ENCODE measurements at regions of chr11 and their contacts with region 1.

Region 1: DNA sequence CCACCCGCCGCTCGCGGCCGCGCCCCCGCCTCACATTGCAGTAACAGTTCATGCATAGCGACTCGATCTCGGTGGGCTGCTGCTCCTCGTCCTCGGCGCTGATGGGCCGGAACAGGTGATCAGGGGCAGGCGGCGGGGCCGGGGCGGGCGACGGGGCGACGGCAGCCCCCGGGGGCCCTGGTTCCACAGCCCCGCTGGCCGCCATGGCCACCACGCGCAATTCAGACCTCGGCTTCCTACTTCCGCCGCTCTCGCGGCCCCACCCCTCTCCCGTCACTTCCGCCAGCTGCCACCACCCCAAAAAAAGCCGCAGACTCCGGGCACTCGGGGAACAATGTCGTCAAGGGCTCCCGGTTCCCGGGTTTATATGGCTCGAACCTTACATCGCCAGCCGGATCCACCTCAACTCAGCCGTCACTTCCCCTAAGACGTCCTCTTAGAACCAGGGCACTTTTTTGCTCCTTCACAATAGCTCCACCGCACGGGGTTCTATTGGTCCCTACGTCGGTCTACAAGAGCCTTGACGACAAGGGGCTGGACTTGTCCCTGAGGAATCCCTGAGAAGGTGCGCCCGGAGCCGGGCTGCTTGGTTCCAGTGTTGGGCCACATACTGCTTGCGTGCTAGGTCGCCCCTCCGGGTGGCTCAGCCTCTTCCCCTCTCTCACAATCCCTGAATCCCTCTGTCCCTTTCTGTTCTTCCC is at the start of gene ZPR1:
- DNase-seq: peak; percentile 97
- H3K4me3 Mint-ChIP-seq: peak within 1 kb of the TSS; percentile 97
- H3K27ac Mint-ChIP-seq: peak within 1 kb of the TSS; percentile 87
- H3K4me1 Mint-ChIP-seq: peaks cover 44% of the 10 kb centered on the region
- H3K27me3 Mint-ChIP-seq: peaks cover 2% of the 10 kb centered on the region
- total RNA-seq, gene ZPR1: 105 and 106 TPM in 2 replicates

Region 2: DNA sequence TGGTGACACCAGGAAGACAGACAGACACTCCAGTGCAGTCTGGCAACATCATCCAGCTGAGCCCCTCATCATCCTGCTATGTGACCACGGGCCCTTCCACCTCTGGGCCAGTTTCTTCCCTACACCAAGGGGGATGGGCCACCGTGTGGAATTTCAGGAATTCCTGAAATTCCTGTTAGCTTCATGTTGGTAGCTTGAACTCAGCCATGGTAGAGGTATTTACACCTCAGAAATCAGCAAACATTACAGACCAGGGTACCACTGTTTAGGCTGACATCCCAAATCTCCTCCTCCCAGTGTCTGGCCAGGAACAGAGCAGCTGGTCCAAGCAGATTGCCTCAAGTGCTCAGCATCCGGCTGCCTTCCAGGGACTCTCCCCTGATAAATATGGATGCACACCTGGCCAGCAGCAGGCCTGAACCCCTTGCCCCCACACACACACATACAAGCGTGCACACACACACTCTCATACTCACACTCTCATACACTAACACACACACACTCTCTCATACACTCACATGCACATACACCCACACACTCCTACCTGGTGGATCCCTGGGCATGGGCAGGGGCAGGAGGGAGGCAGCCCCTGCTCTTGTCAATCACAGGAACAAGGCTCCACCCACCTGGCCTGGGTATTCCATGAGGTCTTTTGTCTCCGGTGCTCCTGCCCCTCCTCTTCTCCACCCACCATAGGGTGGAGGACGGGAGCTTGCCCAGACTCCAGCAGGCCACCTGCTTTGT is 100.3 kb before region 1 on chr11:
- intact Hi-C with region 1: no loop called
- DNase-seq: no peak
- H3K4me3 Mint-ChIP-seq: no peak overlapping the region
- H3K27ac Mint-ChIP-seq: no peak overlapping the region
- H3K4me1 Mint-ChIP-seq: no peaks in the 10 kb centered on the region
- H3K27me3 Mint-ChIP-seq: peaks cover 9% of the 10 kb centered on the region

Region 3: GRCh38 chr11:116762132-116762531 is 25.8 kb before region 1 on chr11:
- intact Hi-C with region 1: no loop called
- DNase-seq: no peak
- H3K4me3 Mint-ChIP-seq: no peak overlapping the region
- H3K27ac Mint-ChIP-seq: no peak overlapping the region
- H3K4me1 Mint-ChIP-seq: peaks cover 6% of the 10 kb centered on the region
- H3K27me3 Mint-ChIP-seq: no peaks in the 10 kb centered on the region

Region 4: DNA sequence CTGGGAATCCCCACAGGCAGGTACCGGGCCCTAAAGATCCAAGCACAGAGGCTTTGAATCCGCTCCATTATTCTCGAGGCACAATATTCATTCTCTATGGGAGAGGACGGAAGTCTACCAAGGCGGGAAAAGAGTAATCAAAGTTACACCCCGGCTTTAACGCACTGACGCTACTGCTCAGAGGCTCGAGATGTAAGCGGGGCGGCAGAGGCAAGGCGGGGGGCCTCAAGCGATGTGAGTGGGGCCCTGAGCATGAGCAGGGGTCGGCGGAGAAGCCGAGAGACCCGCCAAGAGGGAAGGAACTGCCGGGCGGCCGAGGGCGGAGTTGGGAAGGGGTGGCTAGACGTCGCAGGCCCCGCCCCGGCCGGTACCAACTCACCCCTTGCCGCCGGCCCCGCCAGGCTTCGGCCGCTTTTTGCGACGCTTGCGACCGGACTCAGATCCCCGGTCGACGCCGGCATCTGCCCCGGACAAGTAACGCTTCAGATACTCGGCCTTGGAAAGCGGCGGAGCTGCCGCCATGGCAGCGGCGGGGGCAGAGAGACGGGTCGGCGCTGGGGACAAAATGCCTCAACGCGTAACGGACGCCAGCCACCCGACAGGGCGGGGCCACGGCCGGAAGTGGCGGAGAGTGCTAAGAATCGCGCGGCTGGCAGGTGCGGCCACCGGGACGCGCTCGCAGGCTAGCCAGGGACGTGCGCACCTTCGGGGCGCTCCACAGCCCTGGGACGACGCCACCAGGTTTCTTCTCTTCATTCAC is 15.3 kb before region 1 on chr11 and contains the start of gene BUD13:
- intact Hi-C with region 1: loop called (anchors 1 kb)
- DNase-seq: peak; percentile 99
- H3K4me3 Mint-ChIP-seq: peak within 1 kb of the TSS; percentile 91
- H3K27ac Mint-ChIP-seq: peak within 1 kb of the TSS; percentile 95
- H3K4me1 Mint-ChIP-seq: peaks cover 46% of the 10 kb centered on the region
- H3K27me3 Mint-ChIP-seq: no peaks in the 10 kb centered on the region
- total RNA-seq, gene BUD13: 31.5 and 33.2 TPM in 2 replicates

Region 5: DNA sequence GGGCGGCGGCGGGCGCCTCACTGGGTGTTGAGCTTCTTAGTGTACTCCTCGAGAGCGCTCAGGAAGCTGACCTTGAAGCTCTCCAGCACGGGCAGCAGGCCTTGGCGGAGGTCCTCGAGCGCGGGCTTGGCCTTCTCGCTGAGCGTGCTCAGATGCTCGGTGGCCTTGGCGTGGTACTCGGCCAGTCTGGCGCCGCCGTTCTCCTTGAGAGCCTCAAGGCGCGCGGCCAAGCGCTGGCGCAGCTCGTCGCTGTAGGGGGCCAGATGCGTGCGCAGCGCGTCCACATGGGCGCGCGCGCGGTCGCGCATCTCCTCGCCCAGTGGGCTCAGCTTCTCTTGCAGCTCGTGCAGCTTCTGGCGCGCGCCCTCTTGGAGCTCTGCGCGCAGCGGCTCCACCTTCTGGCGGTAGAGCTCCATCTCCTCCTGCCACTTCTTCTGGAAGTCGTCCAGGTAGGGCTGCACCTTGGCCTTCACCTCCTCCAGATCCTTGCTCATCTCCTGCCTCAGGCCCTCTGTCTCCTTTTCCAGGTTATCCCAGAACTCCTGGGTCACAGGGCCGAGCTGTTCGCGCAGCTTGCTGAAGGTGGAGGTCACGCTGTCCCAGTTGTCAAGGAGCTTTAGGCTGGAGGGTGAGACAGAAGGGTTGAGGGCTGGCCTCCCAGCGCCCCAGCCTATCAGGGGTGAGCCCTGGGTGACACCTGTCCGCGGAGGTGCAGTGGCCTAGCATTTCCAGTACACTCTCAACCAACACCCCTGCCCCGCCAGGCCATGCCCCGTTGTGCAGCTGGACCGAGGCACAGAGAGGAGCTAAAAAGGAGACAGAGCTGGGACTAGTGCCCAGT is 48.1 kb after region 1 on chr11:
- intact Hi-C with region 1: loop called (anchors 2 kb)
- DNase-seq: peak; percentile 93
- H3K4me3 Mint-ChIP-seq: peak overlapping the region; percentile 63
- H3K27ac Mint-ChIP-seq: peak overlapping the region; percentile 45
- H3K4me1 Mint-ChIP-seq: peaks cover 11% of the 10 kb centered on the region
- H3K27me3 Mint-ChIP-seq: peaks cover 4% of the 10 kb centered on the region

Region 6: DNA sequence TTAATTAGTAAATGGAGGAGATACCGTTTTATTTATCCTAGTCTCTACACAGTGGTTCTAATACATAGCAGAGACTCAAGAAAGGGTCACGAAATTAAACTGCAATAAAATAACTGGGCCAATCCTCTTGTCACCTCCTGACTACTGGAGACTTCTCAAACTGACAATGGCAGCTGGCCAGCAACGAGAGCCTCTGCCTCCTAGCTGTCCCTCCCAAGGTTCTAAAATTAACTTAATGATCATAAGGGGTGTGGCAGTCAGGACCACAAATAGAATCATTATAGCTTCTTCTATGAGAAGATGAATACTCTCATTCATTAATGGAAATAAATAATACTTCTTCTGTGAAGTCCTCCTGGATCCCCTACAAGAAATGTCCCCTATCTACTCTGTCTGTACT is 113.3 kb after region 1 on chr11:
- intact Hi-C with region 1: no loop called
- DNase-seq: no peak
- H3K4me3 Mint-ChIP-seq: no peak overlapping the region
- H3K27ac Mint-ChIP-seq: no peak overlapping the region
- H3K4me1 Mint-ChIP-seq: peaks cover 11% of the 10 kb centered on the region
- H3K27me3 Mint-ChIP-seq: no peaks in the 10 kb centered on the region

Region 7: DNA sequence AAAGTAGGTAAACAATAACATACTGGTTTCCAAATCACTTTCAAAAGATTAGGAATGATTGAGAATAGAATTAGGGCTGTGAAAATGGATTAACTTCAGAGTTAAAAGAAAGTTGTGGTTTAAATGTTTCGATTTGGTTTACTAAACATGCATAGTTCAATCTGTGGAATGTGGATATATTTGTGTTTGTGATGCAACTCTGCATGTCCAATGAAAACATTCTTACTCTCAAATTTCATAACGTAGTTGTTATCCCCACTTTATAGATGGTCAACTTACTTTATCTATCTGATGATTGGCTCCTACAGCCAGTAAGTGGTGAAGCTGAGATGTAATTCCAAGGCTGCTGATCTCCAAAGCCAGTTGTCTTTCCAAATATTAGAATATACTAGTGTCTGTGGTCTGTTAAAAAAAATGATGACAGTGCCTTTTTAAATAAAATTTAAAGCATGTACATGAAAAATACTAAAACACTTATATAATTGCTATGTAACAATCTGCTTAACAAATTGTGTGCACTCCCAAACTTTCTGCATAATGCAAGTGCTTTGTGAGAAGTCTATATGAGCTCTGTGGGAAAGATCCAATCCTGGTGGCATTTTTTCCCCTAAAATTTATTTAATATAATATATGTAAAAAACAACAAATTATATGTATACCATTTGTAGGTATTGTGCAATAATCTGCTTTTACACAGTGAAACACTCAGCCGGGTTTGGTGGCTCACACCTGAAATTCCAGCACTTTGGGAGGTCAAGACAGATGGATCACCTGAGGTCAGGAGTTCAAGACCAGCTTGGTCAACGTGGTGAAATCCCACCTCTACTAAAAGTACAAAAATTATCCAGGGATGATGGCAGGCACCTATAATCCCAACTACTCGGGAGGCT is 320.0 kb after region 1 on chr11:
- intact Hi-C with region 1: loop called (anchors 1 kb)
- DNase-seq: no peak
- H3K4me3 Mint-ChIP-seq: no peak overlapping the region
- H3K27ac Mint-ChIP-seq: no peak overlapping the region
- H3K4me1 Mint-ChIP-seq: no peaks in the 10 kb centered on the region
- H3K27me3 Mint-ChIP-seq: peaks cover 5% of the 10 kb centered on the region

Measured in activated CD4-positive, alpha-beta T cell treated with anti-CD3 and anti-CD28 coated beads, Interleukin-2, amount 10 ng/mL, durations not matched to agents 24 days and 14 days (primary cell).